ENCODE measurements at regions of chr18 and their contacts with region 1.

Region 1: DNA sequence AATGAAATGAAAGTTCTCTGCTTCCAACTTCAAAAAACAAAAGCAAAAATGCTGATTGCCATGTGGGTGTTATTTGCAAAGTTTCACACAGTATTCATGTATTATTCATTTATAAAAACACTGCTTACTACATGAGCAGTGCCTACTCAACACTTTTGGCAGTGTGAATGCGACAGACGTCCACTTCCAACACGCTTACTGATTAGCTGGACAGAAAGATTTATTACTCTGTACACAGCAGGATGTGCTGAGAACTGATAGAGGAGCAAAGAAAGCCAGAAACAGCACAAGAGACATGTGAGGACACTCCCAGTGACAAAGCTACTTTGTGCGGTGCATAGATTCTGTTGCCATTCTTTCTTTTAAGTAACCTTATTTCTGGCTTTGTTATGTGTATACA is 258.8 kb downstream of the DLGAP1 start:
- DNase-seq: no peak
- ATAC-seq: no peak
- H3K4me3 ChIP-seq: no peak overlapping the region
- H3K27ac ChIP-seq: no peak overlapping the region
- H3K4me1 ChIP-seq: no peaks in the 10 kb centered on the region
- H3K27me3 ChIP-seq: no peaks in the 10 kb centered on the region; a peak in 1 of 5 replicates
- CTCF ChIP-seq: no peak
- EP300 ChIP-seq: no peak
- POLR2A ChIP-seq: no peak
- RAD21 ChIP-seq: no peak

Region 2: DNA sequence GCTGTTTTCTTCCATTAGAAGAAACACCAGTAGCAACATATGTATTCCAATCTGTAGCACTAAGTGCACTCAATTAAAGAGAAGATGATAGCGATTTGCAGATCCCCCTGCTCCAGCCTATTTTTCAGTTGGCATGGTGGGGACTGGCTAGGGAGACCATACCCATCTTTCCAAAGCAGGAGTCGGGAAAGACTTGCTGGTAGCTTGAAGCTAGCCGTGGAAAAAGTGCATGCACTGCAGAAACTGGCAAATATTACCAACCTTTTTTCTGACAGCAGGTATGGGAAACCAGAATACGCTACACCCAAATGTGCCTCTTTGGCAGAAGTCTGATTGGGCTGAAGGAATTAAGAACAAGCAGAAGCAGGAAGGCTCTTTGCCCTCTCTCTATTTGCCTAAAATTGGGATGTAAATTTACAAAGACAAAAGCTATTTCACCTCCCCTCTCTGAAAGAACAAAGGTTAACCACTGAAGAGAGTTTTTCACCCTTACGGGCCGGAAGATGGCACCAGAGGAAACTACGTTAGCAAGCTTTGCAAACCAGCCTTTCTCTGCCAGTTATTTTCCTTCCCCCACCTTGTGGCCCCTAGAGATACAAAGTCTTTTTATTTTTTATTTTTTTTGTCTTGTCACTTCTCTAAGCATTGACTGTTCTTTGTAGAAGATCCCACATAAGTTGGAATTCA is 14.3 kb before region 1 on chr18:
- CTCF ChIA-PET with region 1: no interaction called
- POLR2A ChIA-PET with region 1: no interaction called
- in situ Hi-C with region 1: no loop called
- intact Hi-C with region 1: loop called (anchors 2 kb)
- DNase-seq: peak; percentile 51
- ATAC-seq: peak; percentile 86
- H3K4me3 ChIP-seq: no peak overlapping the region
- H3K27ac ChIP-seq: no peak overlapping the region
- H3K4me1 ChIP-seq: peaks cover 18% of the 10 kb centered on the region
- H3K27me3 ChIP-seq: no peaks in the 10 kb centered on the region
- CTCF ChIP-seq: peak; percentile 65
- EP300 ChIP-seq: peak in 1 of 2 experiments; percentile 3; a peak in 1 of 4 replicates
- POLR2A ChIP-seq: no peak
- RAD21 ChIP-seq: no peak

Region 3: DNA sequence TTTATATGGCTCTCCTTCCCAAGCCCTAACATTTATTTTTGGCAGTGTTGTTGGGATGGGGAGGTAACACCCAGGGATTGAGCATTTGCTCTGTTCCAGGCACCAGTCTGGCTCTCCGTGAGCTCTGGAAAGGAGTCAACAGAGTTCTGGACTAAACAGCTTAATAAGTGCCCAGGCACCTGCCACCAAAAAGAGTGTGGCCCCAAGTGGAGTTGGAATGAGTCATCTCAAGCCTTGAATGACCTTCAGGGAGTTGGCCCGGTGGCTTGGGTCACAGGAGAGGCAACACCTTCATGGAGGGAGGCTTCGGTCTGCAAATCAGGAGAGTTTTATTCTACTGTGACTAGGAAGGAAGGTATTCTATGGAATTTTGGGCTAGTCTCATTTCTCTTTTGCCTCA is 55.5 kb after region 1 on chr18:
- CTCF ChIA-PET with region 1: no interaction called
- POLR2A ChIA-PET with region 1: no interaction called
- in situ Hi-C with region 1: no loop called
- intact Hi-C with region 1: no loop called
- DNase-seq: no peak
- ATAC-seq: no peak
- H3K4me3 ChIP-seq: no peak overlapping the region
- H3K27ac ChIP-seq: no peak overlapping the region
- H3K4me1 ChIP-seq: no peaks in the 10 kb centered on the region
- H3K27me3 ChIP-seq: peaks cover 0 to 10% of the 10 kb centered on the region in 2 experiments; a peak in 1 of 5 replicates
- CTCF ChIP-seq: no peak
- EP300 ChIP-seq: no peak
- POLR2A ChIP-seq: no peak
- RAD21 ChIP-seq: no peak

Region 4: DNA sequence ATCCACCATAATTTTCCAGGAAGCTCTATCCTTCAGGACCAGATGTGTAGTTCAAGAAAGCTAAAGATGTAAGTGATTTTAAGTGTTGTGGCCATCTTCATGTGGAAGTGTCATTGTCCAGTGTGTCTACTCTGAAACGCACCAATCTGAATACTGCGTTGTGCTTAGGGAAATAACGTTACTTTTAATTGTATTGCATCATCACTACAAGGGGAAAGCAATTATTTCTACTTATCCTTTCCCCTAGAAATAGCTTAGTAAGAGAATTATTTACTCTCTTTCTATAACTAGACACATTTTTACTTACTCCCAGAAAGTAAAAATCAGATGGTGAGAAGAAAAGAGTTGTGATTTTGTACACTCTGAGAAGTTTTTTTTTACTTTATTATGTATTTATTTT is 361.2 kb after region 1 on chr18:
- CTCF ChIA-PET with region 1: no interaction called
- POLR2A ChIA-PET with region 1: no interaction called
- in situ Hi-C with region 1: no loop called
- intact Hi-C with region 1: no loop called
- DNase-seq: no peak
- ATAC-seq: no peak
- H3K4me3 ChIP-seq: no peak overlapping the region
- H3K27ac ChIP-seq: no peak overlapping the region
- H3K4me1 ChIP-seq: no peaks in the 10 kb centered on the region
- H3K27me3 ChIP-seq: no peaks in the 10 kb centered on the region
- CTCF ChIP-seq: no peak
- EP300 ChIP-seq: no peak
- POLR2A ChIP-seq: no peak
- RAD21 ChIP-seq: no peak

Measured in HepG2 (cell line).